ENCODE measurements at regions of chr11 and their contacts with region 1.

Region 1: DNA sequence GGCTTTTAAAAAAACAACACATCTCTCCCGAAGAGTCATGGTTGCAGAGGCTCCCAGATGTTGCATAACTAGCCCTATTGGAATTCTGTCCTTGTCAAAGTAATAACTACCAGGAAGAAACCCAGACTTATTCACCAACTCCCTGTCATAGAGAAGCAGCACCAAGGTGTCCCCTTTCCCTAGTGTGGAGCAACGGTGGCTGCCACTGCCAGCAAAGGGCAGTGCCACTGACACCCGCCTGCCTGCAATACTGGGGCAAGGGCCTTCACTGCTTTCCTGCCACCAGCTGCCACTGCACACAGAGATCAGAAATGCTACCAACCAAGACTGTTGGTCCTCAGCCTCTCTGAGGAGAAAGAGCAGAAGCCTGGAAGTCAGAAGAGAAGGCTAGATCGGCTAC is 27.3 kb downstream of the NAP1L4 start:
- DNase-seq: no peak
- H3K4me3 ChIP-seq: no peak overlapping the region
- H3K27ac ChIP-seq: no peak overlapping the region
- H3K4me1 ChIP-seq: no peaks in the 10 kb centered on the region
- H3K27me3 ChIP-seq: no peaks in the 10 kb centered on the region

Region 2: GRCh38 chr11:2951231-2952110 is 13.3 kb before region 1 on chr11:
- CTCF ChIA-PET with region 1: interaction called, 14 read pairs
- POLR2A ChIA-PET with region 1: no interaction called
- DNase-seq: peak in 2 of 3 donors; percentile 35 to 45
- H3K4me3 ChIP-seq: no peak overlapping the region
- H3K27ac ChIP-seq: peak overlapping the region in 1 of 2 experiments; percentile 56
- H3K4me1 ChIP-seq: peaks cover 0 to 21% (median 15%) of the 10 kb centered on the region in 4 experiments
- H3K27me3 ChIP-seq: no peaks in the 10 kb centered on the region

Region 3: GRCh38 chr11:3135481-3136440 is 171.0 kb after region 1 on chr11:
- CTCF ChIA-PET with region 1: no interaction called
- POLR2A ChIA-PET with region 1: no interaction called
- DNase-seq: peak in 2 of 3 donors; percentile 68 to 71
- H3K4me3 ChIP-seq: peak overlapping the region in 1 of 7 experiments; percentile 28
- H3K27ac ChIP-seq: no peak overlapping the region
- H3K4me1 ChIP-seq: peaks cover 0 to 63% (median 44%) of the 10 kb centered on the region in 4 experiments
- H3K27me3 ChIP-seq: no peaks in the 10 kb centered on the region